ENCODE measurements at regions of chr7 and their contacts with region 1.

Region 1: DNA sequence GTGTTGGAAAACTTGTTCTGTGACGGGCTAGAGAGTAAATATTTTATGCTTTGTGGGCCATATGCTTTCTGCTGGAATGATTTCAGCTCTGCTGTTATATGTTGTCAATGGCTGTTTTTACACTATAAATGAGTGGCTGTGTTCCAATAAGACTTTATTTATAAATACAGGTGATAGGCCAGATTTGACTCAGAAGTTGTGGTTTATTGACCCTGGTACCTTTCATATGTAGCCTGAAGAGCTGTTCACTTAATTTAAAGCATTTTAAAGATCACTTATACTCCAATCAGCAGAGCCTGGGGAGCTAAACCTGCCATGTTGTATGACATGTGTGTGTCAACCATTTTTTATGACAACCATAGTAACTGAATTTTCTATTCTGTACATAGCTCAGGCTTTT is 9.1 kb upstream of the SSBP1 start:
- DNase-seq: no peak
- ATAC-seq: no peak
- H3K4me3 ChIP-seq: no peak overlapping the region
- H3K27ac ChIP-seq: no peak overlapping the region
- H3K4me1 ChIP-seq: no peaks in the 10 kb centered on the region
- H3K27me3 ChIP-seq: no peaks in the 10 kb centered on the region
- CTCF ChIP-seq: no peak

Region 2: GRCh38 chr7:141144921-141145629 is 583.9 kb before region 1 on chr7:
- intact Hi-C with region 1: loop called in 1 of 2 experiments (anchors 5 kb)
- DNase-seq: no peak
- ATAC-seq: no peak
- H3K4me3 ChIP-seq: no peak overlapping the region
- H3K27ac ChIP-seq: no peak overlapping the region
- H3K4me1 ChIP-seq: no peaks in the 10 kb centered on the region
- H3K27me3 ChIP-seq: no peaks in the 10 kb centered on the region
- CTCF ChIP-seq: no peak

Region 3: GRCh38 chr7:141563956-141564631 is 164.9 kb before region 1 on chr7:
- intact Hi-C with region 1: no loop called
- DNase-seq: no peak
- ATAC-seq: no peak
- H3K4me3 ChIP-seq: no peak overlapping the region
- H3K27ac ChIP-seq: no peak overlapping the region
- H3K4me1 ChIP-seq: peaks cover 9% of the 10 kb centered on the region
- H3K27me3 ChIP-seq: no peaks in the 10 kb centered on the region
- CTCF ChIP-seq: no peak

Region 4: DNA sequence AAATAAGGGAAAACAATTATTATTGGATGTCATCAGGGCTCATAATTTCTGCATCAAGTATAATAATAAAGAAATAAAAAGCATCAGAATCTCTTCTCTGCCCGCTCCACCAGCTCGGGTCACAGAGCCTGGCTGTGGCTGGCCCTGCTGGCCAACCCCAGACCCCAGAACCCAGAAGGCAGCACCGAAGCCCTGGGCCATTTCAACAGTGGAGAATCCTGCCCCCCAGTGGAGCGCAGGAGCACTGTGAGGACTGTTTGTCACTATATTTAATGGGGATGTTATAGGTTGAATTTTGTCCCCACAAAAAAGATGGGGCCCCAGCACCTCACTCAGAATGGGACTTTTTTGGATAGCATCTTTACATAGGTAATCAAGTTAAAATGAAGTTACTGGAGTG is 54.3 kb before region 1 on chr7:
- intact Hi-C with region 1: no loop called
- DNase-seq: no peak
- ATAC-seq: no peak
- H3K4me3 ChIP-seq: no peak overlapping the region
- H3K27ac ChIP-seq: peak overlapping the region; percentile 30
- H3K4me1 ChIP-seq: no peaks in the 10 kb centered on the region
- H3K27me3 ChIP-seq: no peaks in the 10 kb centered on the region
- CTCF ChIP-seq: peak; percentile 9

Region 5: GRCh38 chr7:141752634-141753033 is 23.6 kb after region 1 on chr7:
- intact Hi-C with region 1: no loop called
- DNase-seq: no peak
- ATAC-seq: no peak
- H3K4me3 ChIP-seq: no peak overlapping the region
- H3K27ac ChIP-seq: no peak overlapping the region
- H3K4me1 ChIP-seq: no peaks in the 10 kb centered on the region
- H3K27me3 ChIP-seq: no peaks in the 10 kb centered on the region
- CTCF ChIP-seq: no peak

Measured in psoas muscle (tissue), 8 donors.